ENCODE measurements at regions of chr3 and their contacts with region 1.

Region 1: GRCh38 chr3:8239718-8240695 is 261.6 kb upstream of the LMCD1 start:
- DNase-seq: peak in 4 of 5 donors; percentile 6 to 22 (median 18)
- H3K4me3 ChIP-seq: no peak overlapping the region
- H3K4me3 Mint-ChIP-seq: no peak overlapping the region
- H3K27ac ChIP-seq: no peak overlapping the region
- H3K27ac Mint-ChIP-seq: peak overlapping the region in 1 of 7 donors; percentile 50
- H3K4me1 ChIP-seq: no peaks in the 10 kb centered on the region
- H3K4me1 Mint-ChIP-seq: no peaks in the 10 kb centered on the region
- H3K27me3 ChIP-seq: no peaks in the 10 kb centered on the region
- H3K27me3 Mint-ChIP-seq: peaks cover 0 to 2% of the 10 kb centered on the region in 2 donors

Region 2: GRCh38 chr3:6753536-6753935 is 1486.5 kb before region 1 on chr3:
- CTCF ChIA-PET with region 1: no interaction called
- POLR2A ChIA-PET with region 1: no interaction called
- intact Hi-C with region 1: no loop called
- DNase-seq: no peak
- H3K4me3 ChIP-seq: no peak overlapping the region
- H3K4me3 Mint-ChIP-seq: no peak overlapping the region
- H3K27ac ChIP-seq: no peak overlapping the region
- H3K27ac Mint-ChIP-seq: no peak overlapping the region
- H3K4me1 ChIP-seq: no peaks in the 10 kb centered on the region
- H3K4me1 Mint-ChIP-seq: no peaks in the 10 kb centered on the region
- H3K27me3 ChIP-seq: no peaks in the 10 kb centered on the region
- H3K27me3 Mint-ChIP-seq: no peaks in the 10 kb centered on the region

Region 3: GRCh38 chr3:8223766-8224165 is 16.2 kb before region 1 on chr3:
- CTCF ChIA-PET with region 1: interaction called, 14 read pairs
- POLR2A ChIA-PET with region 1: no interaction called
- intact Hi-C with region 1: no loop called
- DNase-seq: no peak
- H3K4me3 ChIP-seq: no peak overlapping the region
- H3K4me3 Mint-ChIP-seq: no peak overlapping the region
- H3K27ac ChIP-seq: no peak overlapping the region
- H3K27ac Mint-ChIP-seq: no peak overlapping the region
- H3K4me1 ChIP-seq: no peaks in the 10 kb centered on the region
- H3K4me1 Mint-ChIP-seq: no peaks in the 10 kb centered on the region
- H3K27me3 ChIP-seq: no peaks in the 10 kb centered on the region
- H3K27me3 Mint-ChIP-seq: no peaks in the 10 kb centered on the region

Region 4: GRCh38 chr3:8254489-8254888 is 14.5 kb after region 1 on chr3:
- CTCF ChIA-PET with region 1: interaction called, 20 read pairs
- POLR2A ChIA-PET with region 1: no interaction called
- intact Hi-C with region 1: no loop called
- DNase-seq: no peak
- H3K4me3 ChIP-seq: no peak overlapping the region
- H3K4me3 Mint-ChIP-seq: no peak overlapping the region
- H3K27ac ChIP-seq: no peak overlapping the region
- H3K27ac Mint-ChIP-seq: no peak overlapping the region
- H3K4me1 ChIP-seq: no peaks in the 10 kb centered on the region
- H3K4me1 Mint-ChIP-seq: peaks cover 0 to 4% (median 0%) of the 10 kb centered on the region in 4 donors
- H3K27me3 ChIP-seq: no peaks in the 10 kb centered on the region
- H3K27me3 Mint-ChIP-seq: peaks cover 6 to 10% of the 10 kb centered on the region in 2 donors

Region 5: DNA sequence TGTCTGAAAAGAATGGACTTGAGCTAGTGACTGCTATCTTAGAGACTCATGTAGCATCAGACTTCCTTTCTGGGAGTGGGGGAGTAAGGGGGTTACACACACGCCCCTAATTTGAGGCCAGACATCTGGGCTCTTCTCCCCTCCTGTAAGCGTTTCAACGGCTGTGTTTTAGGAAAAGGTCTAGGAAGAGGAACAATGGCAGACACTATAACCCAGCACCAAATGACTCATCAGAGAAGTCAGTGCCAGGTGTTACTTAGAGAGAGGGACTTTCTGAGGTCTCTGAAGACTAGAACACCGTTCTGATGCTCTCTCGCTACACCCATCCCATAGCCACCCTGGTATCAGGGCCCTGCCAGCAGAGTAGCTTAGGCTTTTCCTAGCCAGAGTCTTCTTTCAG is 339.1 kb after region 1 on chr3:
- CTCF ChIA-PET with region 1: no interaction called
- POLR2A ChIA-PET with region 1: no interaction called
- intact Hi-C with region 1: no loop called
- DNase-seq: no peak
- H3K4me3 ChIP-seq: no peak overlapping the region
- H3K4me3 Mint-ChIP-seq: no peak overlapping the region
- H3K27ac ChIP-seq: no peak overlapping the region
- H3K27ac Mint-ChIP-seq: no peak overlapping the region
- H3K4me1 ChIP-seq: no peaks in the 10 kb centered on the region
- H3K4me1 Mint-ChIP-seq: no peaks in the 10 kb centered on the region
- H3K27me3 ChIP-seq: no peaks in the 10 kb centered on the region
- H3K27me3 Mint-ChIP-seq: no peaks in the 10 kb centered on the region